ENCODE measurements at regions of chr14 and their contacts with region 1.

Region 1: GRCh38 chr14:25032092-25032784 is 17.7 kb downstream of the STXBP6 start:
- DNase-seq: no peak
- H3K4me3 ChIP-seq: no peak overlapping the region
- H3K27ac ChIP-seq: no peak overlapping the region
- H3K27me3 ChIP-seq: no peaks in the 10 kb centered on the region
- CTCF ChIP-seq: peak in 2 of 56 donors; percentile 14 to 20

Region 2: GRCh38 chr14:24959791-24960331 is 72.4 kb before region 1 on chr14:
- intact Hi-C with region 1: loop called in 1 of 2 experiments (anchors 5 kb)
- DNase-seq: no peak
- H3K4me3 ChIP-seq: no peak overlapping the region
- H3K27ac ChIP-seq: peak overlapping the region in 45 of 59 donors; percentile 6 to 79 (median 47)
- H3K27me3 ChIP-seq: no peaks in the 10 kb centered on the region
- CTCF ChIP-seq: no peak

Measured in dorsolateral prefrontal cortex (tissue), 120 donors.